Mammary epithelial cell (primary cell): ENCODE measurements at regions of chr17 and their contacts with region 1.

Region 1: GRCh38 chr17:32551186-32551955 is 64.6 kb downstream of the CDK5R1 start:
- DNase-seq: peak; percentile 92
- H3K4me3 ChIP-seq: peak overlapping the region in 2 of 3 experiments; percentile 22 to 34
- H3K27ac ChIP-seq: peak overlapping the region; percentile 79
- H3K4me1 ChIP-seq: peaks cover 33% of the 10 kb centered on the region
- H3K27me3 ChIP-seq: no peaks in the 10 kb centered on the region
- CTCF ChIP-seq: no peak

Region 2: GRCh38 chr17:32461853-32462617 is 89.3 kb before region 1 on chr17:
- CTCF ChIA-PET with region 1: no interaction called
- dilution Hi-C with region 1: loop called (anchors 5 kb)
- in situ Hi-C with region 1: no loop called
- intact Hi-C with region 1: no loop called
- DNase-seq: peak; percentile 62
- H3K4me3 ChIP-seq: no peak overlapping the region
- H3K27ac ChIP-seq: no peak overlapping the region
- H3K4me1 ChIP-seq: no peaks in the 10 kb centered on the region
- H3K27me3 ChIP-seq: no peaks in the 10 kb centered on the region
- CTCF ChIP-seq: peak; percentile 66 to 71

Region 3: DNA sequence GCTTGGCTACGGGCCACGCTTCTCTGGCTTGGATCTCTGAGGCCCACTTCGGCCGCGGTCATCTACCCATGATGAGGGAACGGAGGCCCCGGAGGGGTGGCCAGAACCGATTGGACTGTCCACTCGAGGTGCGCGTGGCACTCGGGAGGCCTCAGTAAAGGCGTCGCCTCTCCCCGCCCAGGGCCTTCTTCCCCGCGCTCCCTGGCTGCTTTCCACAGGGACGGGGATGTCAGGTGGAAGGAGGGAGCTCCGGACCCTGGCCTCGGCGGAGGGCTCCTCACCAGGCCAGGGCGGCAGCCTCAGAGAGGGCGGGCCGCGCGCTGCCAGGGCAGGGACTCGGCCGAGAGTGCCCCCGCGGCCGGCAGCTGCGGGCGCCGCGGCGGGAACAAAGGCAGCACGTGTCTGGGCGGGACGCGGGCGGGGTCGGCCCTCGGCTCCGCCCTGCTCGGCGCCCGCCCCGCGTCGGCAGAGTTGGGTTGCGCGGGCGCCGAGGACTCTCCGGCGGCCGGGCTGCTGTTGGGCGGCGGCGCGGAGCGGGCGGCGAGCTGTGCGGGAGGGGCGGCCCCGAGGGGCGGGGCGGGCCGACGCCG is 65.2 kb before region 1 on chr17:
- CTCF ChIA-PET with region 1: no interaction called
- dilution Hi-C with region 1: no loop called
- in situ Hi-C with region 1: no loop called
- intact Hi-C with region 1: loop called (anchors 5 kb)
- DNase-seq: peak; percentile 73
- H3K4me3 ChIP-seq: peak overlapping the region in 2 of 3 experiments; percentile 60 to 72
- H3K27ac ChIP-seq: no peak overlapping the region
- H3K4me1 ChIP-seq: peaks cover 21% of the 10 kb centered on the region
- H3K27me3 ChIP-seq: no peaks in the 10 kb centered on the region
- CTCF ChIP-seq: no peak

Region 4: GRCh38 chr17:32519228-32520103 is 31.9 kb before region 1 on chr17:
- CTCF ChIA-PET with region 1: no interaction called
- dilution Hi-C with region 1: loop called (anchors 5 kb)
- in situ Hi-C with region 1: no loop called
- intact Hi-C with region 1: no loop called
- DNase-seq: peak; percentile 69
- H3K4me3 ChIP-seq: peak overlapping the region in 2 of 3 experiments; percentile 48 to 58
- H3K27ac ChIP-seq: peak overlapping the region; percentile 20
- H3K4me1 ChIP-seq: peaks cover 13% of the 10 kb centered on the region
- H3K27me3 ChIP-seq: no peaks in the 10 kb centered on the region
- CTCF ChIP-seq: no peak

Region 5: DNA sequence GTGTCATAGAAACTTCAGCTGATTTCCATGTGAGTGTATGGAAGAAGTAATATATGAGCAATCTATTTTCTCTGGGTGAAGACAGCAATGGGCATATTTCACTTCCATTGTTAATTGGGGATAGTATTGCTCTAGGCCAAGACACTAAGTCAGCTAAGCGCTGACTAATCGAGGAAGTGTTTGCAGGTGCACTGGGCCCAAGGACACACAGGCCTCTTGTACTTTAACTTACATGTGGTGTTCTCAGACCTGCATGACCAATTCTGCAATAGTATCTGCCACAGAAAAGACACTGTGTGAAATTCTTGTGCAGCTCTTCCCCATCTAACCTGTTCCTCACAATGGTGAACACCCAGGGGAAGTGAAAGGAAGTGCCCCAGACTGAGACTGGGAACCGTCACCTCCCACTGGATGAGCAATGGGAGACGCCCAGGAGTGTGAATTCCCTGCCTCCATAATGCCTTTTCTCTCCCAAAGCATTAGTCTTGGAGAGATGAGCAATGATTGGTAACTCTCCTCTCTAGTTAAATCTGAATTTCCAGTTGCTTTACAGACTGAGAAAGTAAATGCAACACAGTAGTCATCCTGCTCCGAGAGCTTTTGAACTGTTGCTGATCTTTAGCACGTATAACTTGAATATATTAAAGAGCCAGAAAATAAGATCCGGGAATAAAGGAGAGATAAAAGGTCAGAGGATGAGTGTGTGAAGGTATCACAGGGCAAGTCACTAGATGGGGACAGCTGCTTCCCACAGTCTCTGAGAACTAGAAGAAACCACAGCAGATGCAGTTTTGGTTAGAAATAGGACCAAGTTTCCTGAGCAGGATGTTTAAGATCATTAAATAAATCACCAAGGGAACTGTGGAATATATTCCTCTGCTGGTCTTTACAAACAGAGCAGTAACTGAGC is 18.1 kb after region 1 on chr17:
- CTCF ChIA-PET with region 1: no interaction called
- dilution Hi-C with region 1: no loop called
- in situ Hi-C with region 1: no loop called
- intact Hi-C with region 1: loop called (anchors 2 kb)
- DNase-seq: peak; percentile 99
- H3K4me3 ChIP-seq: no peak overlapping the region
- H3K27ac ChIP-seq: peak overlapping the region; percentile 90
- H3K4me1 ChIP-seq: peaks cover 40% of the 10 kb centered on the region
- H3K27me3 ChIP-seq: no peaks in the 10 kb centered on the region
- CTCF ChIP-seq: no peak

Region 6: DNA sequence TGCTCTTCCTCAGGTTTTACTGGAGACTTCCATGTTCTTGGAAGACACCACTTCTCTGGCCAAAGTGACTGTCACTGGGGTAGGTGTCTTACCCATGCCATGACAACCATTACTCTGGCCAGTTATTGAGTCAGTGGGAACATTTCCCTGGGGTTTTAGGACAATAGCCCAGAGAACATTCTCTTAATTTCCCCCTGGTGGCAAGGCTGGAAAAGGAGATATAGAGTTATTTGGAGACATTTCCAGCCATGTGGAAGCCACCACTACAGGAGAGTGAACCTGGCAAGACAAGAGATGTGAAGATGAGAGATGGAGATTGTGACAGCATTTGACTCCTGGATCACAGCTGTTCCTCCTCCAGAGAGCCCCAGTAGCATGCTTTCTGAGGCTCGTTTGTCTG is 41.6 kb after region 1 on chr17:
- CTCF ChIA-PET with region 1: no interaction called
- dilution Hi-C with region 1: loop called (anchors 5 kb)
- in situ Hi-C with region 1: no loop called
- intact Hi-C with region 1: no loop called
- DNase-seq: no peak
- H3K4me3 ChIP-seq: no peak overlapping the region
- H3K27ac ChIP-seq: no peak overlapping the region
- H3K4me1 ChIP-seq: no peaks in the 10 kb centered on the region
- H3K27me3 ChIP-seq: no peaks in the 10 kb centered on the region
- CTCF ChIP-seq: no peak